ENCODE measurements at regions of chr1 and their contacts with region 1.

Region 1: DNA sequence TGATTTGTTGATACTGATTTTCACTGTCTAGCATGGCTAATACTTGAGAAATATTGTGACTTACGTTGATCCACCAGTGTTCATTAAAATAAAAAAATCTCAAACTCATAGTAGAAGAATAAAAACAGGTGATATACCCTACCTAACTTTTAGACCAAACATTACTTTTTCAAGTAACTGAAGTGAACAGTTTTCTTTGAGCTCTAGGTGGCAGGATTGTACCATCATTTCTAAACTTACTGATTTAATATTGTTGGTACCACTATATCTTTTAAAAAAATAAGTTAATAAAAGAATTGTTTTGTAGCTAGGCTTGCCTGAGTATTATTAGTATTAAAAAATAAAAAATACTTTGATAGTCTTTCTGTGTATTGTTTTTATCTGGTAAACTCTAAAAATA is 21.5 kb downstream of the CDC73 start:
- DNase-seq: no peak
- H3K4me3 ChIP-seq: no peak overlapping the region
- H3K27ac ChIP-seq: no peak overlapping the region
- H3K4me1 ChIP-seq: no peaks in the 10 kb centered on the region
- H3K27me3 ChIP-seq: no peaks in the 10 kb centered on the region
- CTCF ChIP-seq: no peak

Region 2: DNA sequence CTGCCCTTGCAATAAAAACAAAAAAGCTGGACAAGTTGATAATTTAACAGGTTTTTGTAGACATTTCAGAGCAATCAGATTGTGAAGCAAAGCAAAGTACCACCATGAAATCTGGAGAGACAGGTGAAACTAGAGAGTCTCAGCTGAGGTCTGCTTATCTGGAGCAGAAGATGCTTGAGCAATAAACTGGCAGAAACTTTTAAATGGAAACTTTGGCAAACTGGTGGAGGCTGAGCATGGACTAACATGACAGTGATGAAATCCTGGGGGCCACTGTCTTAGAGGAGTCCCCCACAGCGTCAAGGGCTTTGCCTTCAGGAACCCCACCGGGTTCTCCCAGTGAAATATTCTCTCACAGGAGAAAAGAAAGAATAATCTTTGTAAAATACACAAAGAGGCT is 459.4 kb after region 1 on chr1:
- intact Hi-C with region 1: no loop called
- DNase-seq: no peak
- H3K4me3 ChIP-seq: no peak overlapping the region
- H3K27ac ChIP-seq: no peak overlapping the region
- H3K4me1 ChIP-seq: peaks cover 3% of the 10 kb centered on the region
- H3K27me3 ChIP-seq: no peaks in the 10 kb centered on the region
- CTCF ChIP-seq: no peak

Region 3: DNA sequence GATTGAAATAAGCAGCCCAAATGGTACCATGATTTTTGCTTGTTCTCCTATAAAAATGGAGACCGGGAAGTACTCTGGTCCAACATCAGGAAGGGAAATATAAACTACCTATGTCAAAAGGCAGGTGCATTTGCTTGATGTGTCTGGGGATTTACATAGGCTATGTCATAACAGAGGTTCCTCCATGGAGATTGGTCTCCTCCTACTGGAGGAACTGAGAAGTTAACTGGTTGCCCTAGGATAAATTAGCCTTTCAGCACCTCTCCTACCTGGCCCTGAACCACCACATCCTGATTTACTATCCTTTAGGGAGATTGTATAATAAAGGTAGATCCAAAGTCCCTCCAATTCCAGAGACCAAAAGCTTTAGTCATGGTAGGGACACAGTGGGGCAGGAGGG is 1152.4 kb after region 1 on chr1:
- intact Hi-C with region 1: loop called (anchors 10 kb)
- DNase-seq: peak; percentile 32
- H3K4me3 ChIP-seq: no peak overlapping the region
- H3K27ac ChIP-seq: no peak overlapping the region
- H3K4me1 ChIP-seq: no peaks in the 10 kb centered on the region
- H3K27me3 ChIP-seq: no peaks in the 10 kb centered on the region
- CTCF ChIP-seq: peak; percentile 78